Activated B cell treated with CpG ODN at 0.5 μM for 24 hours (primary cell): ENCODE measurements at regions of chr7 and their contacts with region 1.

Region 1: DNA sequence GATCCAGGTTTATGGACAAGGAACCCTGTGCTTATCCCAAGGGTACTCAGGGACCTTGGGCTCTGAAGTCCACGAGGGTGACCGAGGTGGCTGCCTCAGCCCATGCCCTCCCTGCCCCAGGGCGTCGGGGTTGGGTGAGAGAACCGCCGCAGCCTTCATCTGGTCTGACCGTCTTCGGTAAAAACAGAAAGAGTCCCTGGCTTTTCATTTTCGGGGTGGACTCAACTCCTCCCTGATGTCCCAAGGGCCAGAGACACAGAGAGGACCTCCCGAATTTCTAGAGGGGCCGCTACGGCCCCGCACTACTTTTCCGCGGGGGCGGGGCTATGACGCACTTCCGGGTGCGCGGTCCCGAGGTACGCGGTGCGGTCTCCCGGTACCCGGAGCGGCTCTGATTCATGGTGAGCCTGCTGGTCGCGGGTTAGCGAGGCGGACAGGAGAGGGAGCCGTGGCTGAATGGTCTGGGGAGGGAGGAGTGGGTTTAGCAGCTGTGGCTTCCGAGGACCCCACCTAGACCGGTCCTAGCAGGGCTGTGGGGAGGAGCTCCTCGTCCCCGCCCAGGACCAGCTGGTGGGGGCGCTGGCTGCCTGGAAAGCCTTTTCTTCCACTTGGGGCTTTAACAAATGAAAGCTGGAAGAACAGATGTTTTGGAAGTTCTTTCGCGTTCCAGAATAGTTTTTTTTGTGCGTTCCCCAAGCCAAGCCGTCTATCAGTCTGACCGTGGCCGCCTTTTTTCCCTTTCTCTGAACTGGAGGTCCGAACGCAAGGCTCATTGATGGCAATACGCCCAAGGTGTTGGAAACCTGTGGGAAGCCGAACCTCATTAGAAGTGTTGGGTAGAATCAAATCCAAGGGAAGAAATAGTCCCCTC is at the start of gene ZSCAN21:
- DNase-seq: peak; percentile 87
- ATAC-seq: peak; percentile 90
- H3K4me3 Mint-ChIP-seq: peak within 1 kb of the TSS; percentile 95
- H3K27ac Mint-ChIP-seq: peak within 1 kb of the TSS; percentile 94
- H3K4me1 Mint-ChIP-seq: peaks cover 16% of the 10 kb centered on the region
- H3K27me3 Mint-ChIP-seq: no peaks in the 10 kb centered on the region
- CTCF ChIP-seq: no peak
- total RNA-seq, gene ZSCAN21: 10.6 and 11.3 TPM in 2 replicates

Region 2: DNA sequence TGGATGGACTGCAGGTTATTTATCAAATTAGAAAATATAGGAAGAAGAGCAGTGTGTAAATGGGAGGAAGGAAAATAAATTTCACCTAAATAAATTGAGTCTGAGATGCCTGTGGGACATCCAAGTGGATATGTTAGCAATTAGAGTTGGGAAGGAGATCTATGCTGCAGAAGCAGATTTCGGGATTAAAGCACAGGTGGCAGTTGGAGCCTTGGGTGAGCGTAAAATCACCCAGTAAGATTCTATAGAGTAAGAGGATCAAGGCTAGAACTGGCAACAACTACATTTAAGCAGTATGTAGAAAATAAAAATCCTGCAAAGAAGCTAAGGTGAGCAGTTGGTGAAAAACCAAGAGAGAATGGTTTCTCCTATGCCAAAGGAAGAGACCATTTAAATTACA is 138.7 kb before region 1 on chr7:
- CTCF ChIA-PET with region 1: interaction called, 5 read pairs
- POLR2A ChIA-PET with region 1: no interaction called
- intact Hi-C with region 1: loop called (anchors 2 kb)
- DNase-seq: no peak
- ATAC-seq: no peak
- H3K4me3 Mint-ChIP-seq: no peak overlapping the region
- H3K27ac Mint-ChIP-seq: no peak overlapping the region
- H3K4me1 Mint-ChIP-seq: peaks cover 28% of the 10 kb centered on the region
- H3K27me3 Mint-ChIP-seq: no peaks in the 10 kb centered on the region
- CTCF ChIP-seq: no peak

Region 3: GRCh38 chr7:99975782-99976521 is 73.7 kb before region 1 on chr7 and contains the start of gene AZGP1:
- CTCF ChIA-PET with region 1: interaction called, 6 read pairs
- POLR2A ChIA-PET with region 1: no interaction called
- intact Hi-C with region 1: loop called (anchors 2 kb)
- DNase-seq: no peak
- ATAC-seq: no peak
- H3K4me3 Mint-ChIP-seq: no peak within 1 kb of the TSS
- H3K27ac Mint-ChIP-seq: no peak within 1 kb of the TSS
- H3K4me1 Mint-ChIP-seq: peaks cover 3% of the 10 kb centered on the region
- H3K27me3 Mint-ChIP-seq: peaks cover 22% of the 10 kb centered on the region
- CTCF ChIP-seq: no peak
- total RNA-seq, gene AZGP1: not detected in 2 replicates

Region 4: GRCh38 chr7:99997545-99998137 is 52.0 kb before region 1 on chr7:
- CTCF ChIA-PET with region 1: no interaction called
- POLR2A ChIA-PET with region 1: no interaction called
- intact Hi-C with region 1: loop called (anchors 1 kb)
- DNase-seq: peak; percentile 60
- ATAC-seq: peak; percentile 92
- H3K4me3 Mint-ChIP-seq: peak overlapping the region; percentile 80
- H3K27ac Mint-ChIP-seq: peak overlapping the region; percentile 85
- H3K4me1 Mint-ChIP-seq: peaks cover 12% of the 10 kb centered on the region
- H3K27me3 Mint-ChIP-seq: peaks cover 1% of the 10 kb centered on the region
- CTCF ChIP-seq: no peak

Region 5: DNA sequence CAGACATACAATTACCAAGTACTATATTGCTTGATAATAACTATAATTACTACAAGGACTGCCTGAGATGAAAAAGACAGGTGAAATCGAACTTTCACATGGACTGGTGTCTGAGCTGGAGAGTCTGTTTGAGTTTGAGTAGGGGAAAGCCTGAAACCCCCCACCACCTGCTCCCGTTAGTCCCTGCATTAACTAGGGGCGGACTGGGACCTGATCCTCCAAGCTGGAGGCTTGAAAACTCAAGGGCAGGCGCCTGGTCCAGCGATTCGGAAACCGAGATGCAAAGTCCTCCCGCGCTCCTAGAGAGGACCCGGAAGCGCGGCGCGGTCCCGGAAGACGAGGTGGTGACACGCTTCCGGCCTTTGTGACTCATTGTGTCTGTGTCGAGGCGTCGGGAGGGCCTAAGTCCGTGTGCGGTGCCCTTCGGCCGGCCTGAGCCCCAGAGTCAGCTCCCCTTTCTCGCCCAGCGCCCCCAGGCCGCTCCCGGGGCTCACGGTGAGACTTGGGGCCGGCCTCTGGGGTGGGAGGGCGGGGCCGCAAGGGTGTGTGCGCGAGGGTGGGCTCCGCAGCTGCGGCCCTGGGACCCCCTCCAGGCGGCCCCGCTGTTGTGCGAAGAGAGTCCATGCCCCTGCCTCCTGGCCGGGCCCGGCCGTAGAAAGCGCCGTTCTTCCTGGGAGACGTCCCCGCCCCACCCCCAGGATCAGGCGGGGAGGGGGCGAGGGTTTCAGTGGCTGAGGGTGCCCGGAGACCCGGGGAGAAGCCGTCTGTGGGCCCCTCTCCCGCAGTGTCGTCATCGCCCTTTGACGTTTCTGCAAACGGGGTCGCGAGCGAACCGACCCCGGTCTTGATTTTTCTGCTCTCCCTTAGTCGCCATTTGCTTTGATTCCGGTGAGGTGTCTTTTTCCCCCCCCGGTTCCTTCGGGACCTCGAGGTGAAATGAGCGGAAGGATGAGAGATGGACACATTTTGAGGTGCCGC is 34.2 kb before region 1 on chr7 and contains the start of gene ZKSCAN1:
- CTCF ChIA-PET with region 1: no interaction called
- POLR2A ChIA-PET with region 1: interaction called, 14 read pairs
- intact Hi-C with region 1: loop called (anchors 1 kb)
- DNase-seq: peak; percentile 76
- ATAC-seq: peak; percentile 97
- H3K4me3 Mint-ChIP-seq: peak within 1 kb of the TSS; percentile 90
- H3K27ac Mint-ChIP-seq: peak within 1 kb of the TSS; percentile 84
- H3K4me1 Mint-ChIP-seq: peaks cover 34% of the 10 kb centered on the region
- H3K27me3 Mint-ChIP-seq: peaks cover 6% of the 10 kb centered on the region
- CTCF ChIP-seq: no peak
- total RNA-seq, gene ZKSCAN1: 59.0 and 70.6 TPM in 2 replicates

Region 6: GRCh38 chr7:100126931-100127865 is 77.5 kb after region 1 on chr7 and contains the start of gene MBLAC1:
- CTCF ChIA-PET with region 1: no interaction called
- POLR2A ChIA-PET with region 1: interaction called, 5 read pairs
- intact Hi-C with region 1: loop called (anchors 1 kb)
- DNase-seq: peak; percentile 81
- ATAC-seq: peak; percentile 85
- H3K4me3 Mint-ChIP-seq: peak within 1 kb of the TSS; percentile 100
- H3K27ac Mint-ChIP-seq: peak within 1 kb of the TSS; percentile 100
- H3K4me1 Mint-ChIP-seq: peaks cover 41% of the 10 kb centered on the region
- H3K27me3 Mint-ChIP-seq: no peaks in the 10 kb centered on the region
- CTCF ChIP-seq: no peak
- total RNA-seq, gene MBLAC1: 1.9 and 2.2 TPM in 2 replicates